Breast epithelium (tissue), 4 donors: ENCODE measurements at regions of chr9 and their contacts with region 1.

Region 1: DNA sequence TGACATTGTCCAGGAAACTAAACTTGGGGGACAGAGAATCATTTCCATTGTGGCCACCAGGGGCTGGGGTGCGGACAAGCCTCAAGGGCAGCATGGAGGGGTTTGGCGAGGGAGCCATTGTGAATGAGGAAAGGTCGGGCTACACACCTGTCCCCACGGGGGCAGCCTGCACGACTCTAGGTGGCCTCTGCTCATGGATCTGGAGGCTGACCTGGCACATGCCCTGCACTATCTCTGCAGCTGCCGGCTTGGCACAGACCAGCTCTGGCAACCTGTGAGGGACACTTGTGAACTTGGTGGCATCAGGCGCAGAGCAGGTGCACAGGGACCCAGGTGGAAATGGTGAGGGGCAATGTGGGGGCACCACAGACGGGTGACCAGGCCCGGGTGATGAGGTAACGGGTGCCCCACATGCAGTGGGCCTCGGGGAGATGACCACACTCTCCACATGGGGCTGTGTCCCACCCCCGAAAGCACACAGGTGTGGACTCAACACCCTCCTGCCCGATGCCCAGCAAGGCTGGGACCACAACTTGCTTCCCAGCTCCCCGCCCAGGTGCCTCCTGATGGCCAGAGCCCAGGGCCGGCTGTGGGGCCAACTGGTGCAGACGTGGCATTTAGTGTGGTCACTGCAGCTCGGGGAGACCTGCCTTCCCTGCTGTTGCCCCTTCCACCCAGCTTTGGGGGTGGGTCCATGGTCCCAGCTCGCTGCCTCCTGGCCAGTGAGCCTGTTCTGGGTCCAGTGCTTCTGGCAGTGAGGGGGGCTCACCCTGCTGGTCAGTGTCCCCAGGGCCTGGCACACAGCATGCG is 60.9 kb upstream of the UBAC1 start:
- DNase-seq: peak in 1 of 2 donors; percentile 44
- H3K4me3 ChIP-seq: no peak overlapping the region
- H3K27ac ChIP-seq: no peak overlapping the region
- H3K4me1 ChIP-seq: no peaks in the 10 kb centered on the region
- H3K27me3 ChIP-seq: no peaks in the 10 kb centered on the region
- CTCF ChIP-seq: no peak
- POLR2A ChIP-seq: no peak

Region 2: GRCh38 chr9:136004712-136005111 is 17.4 kb before region 1 on chr9:
- intact Hi-C with region 1: loop called (anchors 1 kb)
- DNase-seq: no peak
- H3K4me3 ChIP-seq: no peak overlapping the region
- H3K27ac ChIP-seq: peak overlapping the region in 1 of 2 donors; percentile 7
- H3K4me1 ChIP-seq: no peaks in the 10 kb centered on the region
- H3K27me3 ChIP-seq: no peaks in the 10 kb centered on the region
- CTCF ChIP-seq: no peak
- POLR2A ChIP-seq: no peak

Region 3: GRCh38 chr9:136051517-136052432 is 29.7 kb after region 1 on chr9:
- intact Hi-C with region 1: loop called (anchors 2 kb)
- DNase-seq: peak; percentile 72 to 80
- H3K4me3 ChIP-seq: peak overlapping the region; percentile 35 to 67 (median 61)
- H3K27ac ChIP-seq: peak overlapping the region; percentile 66 to 79
- H3K4me1 ChIP-seq: peaks cover 10 to 22% of the 10 kb centered on the region in 2 donors
- H3K27me3 ChIP-seq: no peaks in the 10 kb centered on the region
- CTCF ChIP-seq: no peak
- POLR2A ChIP-seq: no peak